Activated naive CD4-positive, alpha-beta T cell treated with anti-CD3 and anti-CD28 coated beads for 36 hours (primary cell): ENCODE measurements at regions of chr1 and their contacts with region 1.

Region 1: DNA sequence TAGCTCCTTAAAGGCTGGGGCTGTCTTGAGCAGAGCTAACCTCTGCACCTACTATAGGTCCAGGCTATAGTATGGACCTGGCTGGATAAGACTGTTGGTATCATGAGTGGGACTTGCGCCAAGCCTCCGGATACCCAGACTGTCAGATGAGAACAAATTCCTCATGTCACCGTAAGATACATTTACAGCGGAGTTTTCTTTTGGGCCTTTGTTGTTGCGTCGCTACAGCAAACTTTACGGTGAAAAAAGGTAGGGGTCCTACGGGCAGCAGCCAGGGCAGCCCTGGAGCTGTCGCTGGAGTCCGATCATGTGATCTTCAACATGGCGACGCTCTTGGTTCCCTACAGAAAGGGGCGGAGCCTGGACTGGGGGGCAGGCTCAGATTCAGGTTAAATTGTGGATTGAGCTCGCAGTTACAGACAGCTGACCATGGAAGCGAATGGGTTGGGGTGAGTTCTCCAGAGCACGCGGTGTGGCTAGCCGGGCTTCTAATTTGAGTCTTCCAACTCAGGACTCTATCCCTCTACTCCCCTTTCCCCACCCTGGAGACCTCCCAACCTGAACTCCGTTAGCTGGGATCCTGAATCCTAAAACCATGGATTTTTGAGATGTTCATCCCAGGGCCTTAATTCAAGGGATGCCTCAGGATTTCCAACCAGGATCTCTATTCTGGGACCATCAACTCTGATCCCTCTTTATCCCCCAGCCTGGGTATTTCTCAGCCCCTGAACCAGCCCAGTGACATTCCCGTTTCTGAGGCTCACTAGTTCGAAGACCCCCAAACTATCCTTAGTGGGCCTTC is at the start of gene UROD:
- DNase-seq: peak; percentile 96
- H3K4me3 Mint-ChIP-seq: peak within 1 kb of the TSS; percentile 81
- H3K27ac Mint-ChIP-seq: peak within 1 kb of the TSS; percentile 89
- H3K4me1 Mint-ChIP-seq: peaks cover 36% of the 10 kb centered on the region
- H3K27me3 Mint-ChIP-seq: no peaks in the 10 kb centered on the region
- total RNA-seq, gene UROD: 117 to 126 TPM

Region 2: GRCh38 chr1:44714944-44715571 is 297.0 kb before region 1 on chr1:
- CTCF ChIA-PET with region 1: no interaction called
- intact Hi-C with region 1: loop called (anchors 1 kb)
- DNase-seq: peak; percentile 81
- H3K4me3 Mint-ChIP-seq: peak overlapping the region; percentile 32
- H3K27ac Mint-ChIP-seq: peak overlapping the region; percentile 21
- H3K4me1 Mint-ChIP-seq: peaks cover 47% of the 10 kb centered on the region
- H3K27me3 Mint-ChIP-seq: no peaks in the 10 kb centered on the region

Region 3: GRCh38 chr1:44835738-44836675 is 176.0 kb before region 1 on chr1:
- CTCF ChIA-PET with region 1: interaction called, 13 read pairs
- intact Hi-C with region 1: loop called (anchors 1 kb)
- DNase-seq: peak; percentile 98
- H3K4me3 Mint-ChIP-seq: no peak overlapping the region
- H3K27ac Mint-ChIP-seq: no peak overlapping the region
- H3K4me1 Mint-ChIP-seq: peaks cover 5% of the 10 kb centered on the region
- H3K27me3 Mint-ChIP-seq: peaks cover 9% of the 10 kb centered on the region

Region 4: DNA sequence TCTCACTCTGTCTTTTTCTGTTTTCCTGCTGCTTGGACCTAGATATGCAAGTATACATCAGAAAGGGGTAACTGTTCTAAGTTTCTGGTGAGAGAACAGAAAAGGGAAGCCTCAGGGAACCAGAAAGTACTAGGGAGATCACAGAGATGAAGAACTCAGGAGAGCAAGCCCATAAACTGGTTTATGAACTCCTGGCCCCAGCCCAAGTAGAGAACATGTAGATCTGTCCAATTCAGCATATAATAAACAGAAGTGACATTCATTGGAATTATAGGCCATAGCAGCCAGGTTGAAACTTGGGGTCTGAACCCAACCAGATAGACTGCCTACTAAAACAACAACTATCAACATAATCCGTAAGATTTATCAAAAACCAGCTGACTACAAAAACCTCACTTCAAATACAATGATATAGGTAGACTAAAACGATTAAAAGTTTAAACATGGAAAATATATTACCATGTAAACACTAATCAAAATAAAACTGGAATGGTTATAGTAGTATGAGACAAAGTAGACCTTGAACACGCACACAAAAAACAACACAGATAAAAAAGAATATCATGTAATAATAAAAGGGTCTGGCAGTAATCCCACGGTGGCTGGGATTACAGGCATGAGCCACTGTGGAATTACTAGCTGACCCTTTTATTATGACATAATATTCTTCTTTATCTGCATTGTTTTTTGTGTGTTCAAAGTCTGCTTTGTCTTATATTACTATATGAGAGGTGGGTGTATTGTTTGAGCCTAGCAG is 129.4 kb after region 1 on chr1:
- CTCF ChIA-PET with region 1: no interaction called
- intact Hi-C with region 1: no loop called
- DNase-seq: no peak
- H3K4me3 Mint-ChIP-seq: no peak overlapping the region
- H3K27ac Mint-ChIP-seq: no peak overlapping the region
- H3K4me1 Mint-ChIP-seq: peaks cover 5% of the 10 kb centered on the region
- H3K27me3 Mint-ChIP-seq: no peaks in the 10 kb centered on the region

Region 5: GRCh38 chr1:45205910-45206721 is 194.1 kb after region 1 on chr1 and contains the start of gene ZSWIM5:
- CTCF ChIA-PET with region 1: interaction called, 3 read pairs
- intact Hi-C with region 1: loop called (anchors 2 kb)
- DNase-seq: peak; percentile 59
- H3K4me3 Mint-ChIP-seq: peak within 1 kb of the TSS; percentile 90
- H3K27ac Mint-ChIP-seq: peak within 1 kb of the TSS; percentile 72
- H3K4me1 Mint-ChIP-seq: peaks cover 33% of the 10 kb centered on the region
- H3K27me3 Mint-ChIP-seq: peaks cover 4% of the 10 kb centered on the region
- total RNA-seq, gene ZSWIM5: 0.15 to 0.26 TPM

Region 6: DNA sequence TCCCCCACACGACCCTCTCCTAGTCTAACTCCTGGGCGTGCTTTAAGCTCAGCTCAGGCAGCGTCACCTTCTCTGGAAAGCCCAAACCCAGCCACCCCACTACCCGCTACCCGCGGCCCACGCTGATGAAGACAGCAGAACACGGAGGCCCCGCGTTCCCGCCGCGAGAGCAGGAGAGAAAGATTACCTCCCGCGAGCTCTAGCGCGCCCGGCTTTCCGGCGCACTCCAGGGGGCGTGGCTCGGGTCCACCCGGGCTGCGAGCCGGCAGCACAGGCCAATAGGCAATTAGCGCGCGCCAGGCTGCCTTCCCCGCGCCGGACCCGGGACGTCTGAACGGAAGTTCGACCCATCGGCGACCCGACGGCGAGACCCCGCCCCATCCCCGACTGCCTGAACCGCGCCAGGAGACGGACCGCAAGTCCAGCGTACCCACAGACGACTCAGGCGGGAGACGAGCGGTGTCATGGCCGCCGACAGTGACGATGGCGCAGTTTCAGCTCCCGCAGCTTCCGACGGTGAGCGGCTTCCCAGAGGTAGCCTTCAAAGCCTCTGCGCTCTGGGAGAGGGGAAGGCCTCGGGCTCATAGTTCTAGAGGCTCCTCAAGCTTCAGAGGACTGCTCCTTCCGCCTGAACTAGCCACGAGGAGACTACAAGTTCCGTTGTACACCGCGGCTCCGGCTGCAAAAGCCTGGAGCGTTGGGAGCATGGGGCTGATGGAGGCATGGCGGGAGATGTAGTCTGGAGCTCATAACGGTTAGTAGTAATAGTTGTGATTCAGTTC is 327.9 kb after region 1 on chr1 and contains the starts of genes MUTYH and TOE1:
- CTCF ChIA-PET with region 1: interaction called, 17 read pairs
- intact Hi-C with region 1: loop called (anchors 1 kb)
- DNase-seq: peak; percentile 95
- H3K4me3 Mint-ChIP-seq: peak within 1 kb of the TSS; percentile 100
- H3K27ac Mint-ChIP-seq: peak within 1 kb of the TSS; percentile 100
- H3K4me1 Mint-ChIP-seq: peaks cover 35% of the 10 kb centered on the region
- H3K27me3 Mint-ChIP-seq: no peaks in the 10 kb centered on the region
- total RNA-seq, gene MUTYH: 42.0 to 45.0 TPM
- total RNA-seq, gene TOE1: 23.0 to 23.8 TPM